WTC11 (cell line): ENCODE measurements at regions of chr2 and their contacts with region 1.

Region 1: DNA sequence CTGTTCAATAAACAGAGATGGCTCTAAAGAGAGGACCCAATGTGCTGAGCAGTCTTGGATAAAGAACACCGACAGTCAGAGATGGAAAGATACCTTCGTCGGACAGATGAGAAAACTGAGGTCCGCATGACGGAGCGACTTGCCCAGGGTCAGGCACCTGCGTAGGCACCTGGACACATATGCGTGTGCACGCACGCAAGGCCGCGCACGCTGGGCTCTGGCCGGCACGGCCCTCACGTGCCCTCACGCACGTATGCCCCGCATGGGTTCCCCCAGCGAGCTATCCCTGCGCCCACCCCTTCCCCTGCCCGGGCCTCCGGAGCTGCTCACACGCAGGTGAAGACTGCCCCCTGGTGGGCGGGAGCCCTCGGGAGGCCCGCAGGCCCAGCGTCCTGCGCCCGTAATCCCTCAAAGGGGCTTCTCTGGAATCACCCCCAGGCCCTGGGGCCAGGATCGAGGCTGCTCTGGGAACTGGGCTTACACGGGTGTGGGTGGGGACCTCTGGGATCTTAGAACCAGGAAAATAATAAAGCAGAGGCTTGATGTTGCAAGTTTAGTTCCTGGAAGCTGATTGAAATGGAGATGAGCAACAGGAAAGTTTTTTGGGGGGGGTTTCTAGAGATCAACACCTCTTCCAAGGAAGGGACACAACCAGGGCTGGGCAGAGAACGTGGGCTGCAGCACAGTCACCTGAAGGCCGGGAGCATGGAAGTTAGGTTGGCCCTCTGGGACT is 246.3 kb downstream of the TNS1 start:
- DNase-seq: peak; percentile 93
- ATAC-seq: peak; percentile 97
- H3K4me3 Mint-ChIP-seq: peak overlapping the region; percentile 44
- H3K27ac Mint-ChIP-seq: no peak overlapping the region
- H3K4me1 Mint-ChIP-seq: peaks cover 20% of the 10 kb centered on the region
- H3K27me3 Mint-ChIP-seq: peaks cover 17% of the 10 kb centered on the region
- CTCF ChIP-seq: peak; percentile 89

Region 2: GRCh38 chr2:217713395-217714286 is 42.9 kb before region 1 on chr2:
- CTCF ChIA-PET with region 1: interaction called, 10 read pairs
- POLR2A ChIA-PET with region 1: no interaction called
- DNase-seq: peak; percentile 91
- ATAC-seq: peak; percentile 89
- H3K4me3 Mint-ChIP-seq: no peak overlapping the region
- H3K27ac Mint-ChIP-seq: no peak overlapping the region
- H3K4me1 Mint-ChIP-seq: peaks cover 13% of the 10 kb centered on the region
- H3K27me3 Mint-ChIP-seq: peaks cover 3% of the 10 kb centered on the region
- CTCF ChIP-seq: peak; percentile 96

Region 3: GRCh38 chr2:217740178-217740577 is 16.4 kb before region 1 on chr2:
- CTCF ChIA-PET with region 1: interaction called, 12 read pairs
- POLR2A ChIA-PET with region 1: no interaction called
- DNase-seq: no peak
- ATAC-seq: no peak
- H3K4me3 Mint-ChIP-seq: no peak overlapping the region
- H3K27ac Mint-ChIP-seq: no peak overlapping the region
- H3K4me1 Mint-ChIP-seq: peaks cover 3% of the 10 kb centered on the region; the same call in 1 of the 2 replicates
- H3K27me3 Mint-ChIP-seq: no peaks in the 10 kb centered on the region
- CTCF ChIP-seq: no peak

Region 4: DNA sequence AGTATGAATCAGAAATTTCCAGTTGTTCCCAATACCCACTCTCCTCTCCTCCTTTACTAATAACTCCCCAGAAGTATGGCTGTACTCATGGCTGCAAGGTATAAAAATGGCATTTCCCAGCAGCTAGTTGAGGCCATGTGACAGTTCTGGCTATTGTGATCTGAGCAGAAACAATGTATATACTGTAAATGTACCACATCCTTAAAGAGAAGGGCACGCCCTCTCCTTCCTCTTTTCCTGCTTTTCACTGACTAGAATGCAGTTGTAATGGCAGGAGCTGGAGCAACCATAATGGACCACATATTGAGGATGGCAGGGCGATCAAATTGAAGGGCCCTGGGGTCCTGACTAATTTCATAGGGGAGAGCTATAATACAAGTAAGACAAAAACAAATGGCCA is 35.0 kb after region 1 on chr2:
- CTCF ChIA-PET with region 1: no interaction called
- POLR2A ChIA-PET with region 1: no interaction called
- DNase-seq: no peak
- ATAC-seq: no peak
- H3K4me3 Mint-ChIP-seq: no peak overlapping the region
- H3K27ac Mint-ChIP-seq: no peak overlapping the region
- H3K4me1 Mint-ChIP-seq: peaks cover 12% of the 10 kb centered on the region
- H3K27me3 Mint-ChIP-seq: peaks cover 4% of the 10 kb centered on the region; the same call in 1 of the 2 replicates
- CTCF ChIP-seq: no peak

Region 5: DNA sequence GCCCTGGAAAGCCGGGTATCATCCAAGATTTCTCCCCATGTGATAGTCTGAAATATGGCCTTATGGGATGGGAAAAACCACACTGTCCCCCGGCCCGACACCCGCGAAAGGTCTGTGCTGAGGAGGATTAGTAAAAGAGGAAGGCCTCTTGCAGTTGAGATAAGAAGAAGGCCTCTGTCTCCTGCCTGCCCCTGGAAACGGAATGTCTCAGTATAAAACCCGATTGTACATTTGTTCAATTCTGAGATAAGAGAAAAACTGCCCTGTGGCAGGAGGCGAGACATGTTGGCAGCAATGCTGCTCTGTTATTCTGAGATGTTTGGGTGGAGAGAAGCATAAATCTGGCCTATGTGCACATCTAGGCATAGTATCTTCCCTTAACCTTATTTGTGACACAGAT is 339.3 kb after region 1 on chr2:
- CTCF ChIA-PET with region 1: no interaction called
- POLR2A ChIA-PET with region 1: no interaction called
- DNase-seq: no peak
- ATAC-seq: no peak
- H3K4me3 Mint-ChIP-seq: no peak overlapping the region
- H3K27ac Mint-ChIP-seq: no peak overlapping the region
- H3K4me1 Mint-ChIP-seq: no peaks in the 10 kb centered on the region
- H3K27me3 Mint-ChIP-seq: peaks cover 18% of the 10 kb centered on the region
- CTCF ChIP-seq: no peak